ENCODE measurements at regions of chr22 and their contacts with region 1.

Region 1: DNA sequence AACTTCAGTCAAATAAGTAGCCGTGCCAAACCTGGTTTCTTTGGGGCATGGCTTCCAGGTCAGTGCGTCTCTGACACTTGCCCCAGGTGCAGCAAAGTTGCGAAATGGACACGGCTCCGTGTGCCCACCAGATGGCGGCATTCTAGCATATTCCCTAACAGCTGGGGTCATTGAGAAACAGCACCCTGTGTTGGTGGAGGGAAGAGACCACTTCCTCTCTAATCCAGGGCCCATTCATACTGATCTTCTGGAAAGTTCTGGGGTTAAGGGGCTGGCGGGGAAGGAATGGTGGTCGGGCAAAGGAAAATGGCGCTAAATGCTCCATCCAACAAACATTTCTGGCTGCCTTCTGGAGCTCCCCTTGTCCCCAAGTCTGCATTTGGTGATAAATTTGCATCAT is 141.2 kb upstream of the TIMP3 start:
- DNase-seq: peak; percentile 8 to 66 (median 53)
- ATAC-seq: no peak
- H3K4me3 ChIP-seq: no peak overlapping the region
- H3K4me3 Mint-ChIP-seq: no peak overlapping the region
- H3K27ac ChIP-seq: no peak overlapping the region
- H3K27ac Mint-ChIP-seq: no peak overlapping the region
- H3K4me1 ChIP-seq: no peaks in the 10 kb centered on the region
- H3K4me1 Mint-ChIP-seq: peaks cover 4% of the 10 kb centered on the region
- H3K27me3 ChIP-seq: no peaks in the 10 kb centered on the region
- H3K27me3 Mint-ChIP-seq: peaks cover 6% of the 10 kb centered on the region
- CTCF ChIP-seq: peak; percentile 61

Region 2: DNA sequence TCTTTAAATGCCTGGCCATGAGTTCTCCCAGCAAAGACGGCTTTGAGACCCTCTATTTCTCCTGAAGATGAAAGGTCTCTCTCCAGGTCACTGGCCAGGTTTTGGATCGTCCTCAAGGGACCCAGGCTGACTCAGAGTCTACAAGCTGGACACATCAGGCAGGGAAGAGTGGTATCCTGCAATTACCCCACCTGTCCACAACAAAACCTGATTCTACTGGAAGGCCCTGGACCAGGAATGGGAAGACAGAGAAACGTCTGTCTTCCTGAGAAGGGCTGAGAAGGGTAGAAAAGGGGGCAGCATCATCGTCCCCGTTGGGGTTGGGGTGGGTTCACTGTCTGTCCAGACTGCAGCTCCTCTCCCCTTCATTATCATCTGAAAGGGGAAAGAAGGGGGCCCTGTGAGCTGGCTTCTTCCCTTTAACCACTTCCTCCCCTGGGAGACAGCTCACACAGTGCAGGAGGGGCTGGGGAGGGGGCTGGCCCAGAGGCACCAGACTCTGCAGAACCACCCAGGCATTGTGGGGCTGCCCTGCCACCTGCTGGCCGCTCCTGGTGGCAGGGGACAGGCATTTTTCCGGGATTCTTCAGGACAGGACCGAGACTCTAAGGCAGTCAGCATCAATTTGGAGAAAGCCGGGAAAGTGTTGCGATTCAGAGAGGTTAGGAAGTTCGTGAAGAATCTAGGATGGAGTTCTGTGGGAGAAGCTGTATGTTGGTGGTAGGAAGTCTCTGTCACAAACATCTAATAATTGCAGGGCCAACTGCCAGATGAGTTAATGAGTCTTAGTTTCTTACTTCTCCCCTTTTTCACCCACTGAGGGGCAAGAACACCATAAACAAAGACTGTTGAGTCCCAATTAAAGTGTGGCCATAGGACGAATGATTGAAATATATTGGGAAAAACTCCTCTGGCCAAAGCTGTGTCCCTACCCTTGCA is 340.3 kb after region 1 on chr22:
- CTCF ChIA-PET with region 1: interaction called, 3 read pairs
- POLR2A ChIA-PET with region 1: no interaction called
- intact Hi-C with region 1: loop called in 1 of 2 experiments (anchors 2 kb)
- DNase-seq: peak in 6 of 9 experiments; percentile 4 to 51 (median 25)
- ATAC-seq: no peak
- H3K4me3 ChIP-seq: no peak overlapping the region
- H3K4me3 Mint-ChIP-seq: no peak overlapping the region
- H3K27ac ChIP-seq: no peak overlapping the region
- H3K27ac Mint-ChIP-seq: no peak overlapping the region
- H3K4me1 ChIP-seq: no peaks in the 10 kb centered on the region
- H3K4me1 Mint-ChIP-seq: peaks cover 2% of the 10 kb centered on the region
- H3K27me3 ChIP-seq: no peaks in the 10 kb centered on the region
- H3K27me3 Mint-ChIP-seq: peaks cover 6% of the 10 kb centered on the region
- CTCF ChIP-seq: peak; percentile 62